Posterior vena cava (tissue), 2 donors: ENCODE measurements at regions of chr5 and their contacts with region 1.

Region 1: DNA sequence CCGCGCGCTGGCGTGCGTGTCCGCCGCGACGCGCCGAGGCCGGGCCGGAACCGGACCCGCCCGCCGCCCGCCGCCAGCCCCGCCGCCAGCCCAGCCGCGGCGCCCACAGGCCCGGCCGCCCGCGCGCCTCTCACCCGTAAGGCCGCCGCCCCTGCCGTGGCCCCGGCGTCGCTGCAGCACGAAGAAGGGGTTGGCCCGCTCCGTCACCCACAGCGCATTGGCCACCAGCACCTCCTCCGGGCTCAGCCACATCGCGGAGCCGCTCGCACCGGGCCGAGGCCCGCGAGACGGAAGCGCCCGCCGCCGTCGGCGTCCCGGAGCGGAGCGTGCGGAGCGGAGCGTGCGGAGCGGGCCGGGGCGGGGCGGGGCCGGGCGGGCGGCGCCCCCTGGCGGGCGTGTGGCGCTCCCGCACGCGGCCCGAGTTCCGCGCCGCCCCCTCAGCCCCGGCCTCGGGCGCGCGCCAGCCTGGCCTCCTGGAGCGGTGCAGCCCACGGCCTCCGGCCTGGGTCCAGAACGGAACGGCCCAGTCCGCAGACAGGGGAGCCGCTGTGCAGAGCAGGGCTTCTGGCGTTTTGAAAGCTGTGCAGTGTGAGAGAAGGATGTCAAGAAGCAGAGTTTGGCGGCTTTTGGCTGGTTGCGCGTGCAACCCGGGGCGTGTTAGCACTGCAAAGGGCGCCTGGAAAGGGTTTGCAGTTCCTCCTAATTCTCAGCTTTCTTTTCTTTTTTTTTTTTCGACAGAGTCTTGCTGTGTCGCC is at the start of gene TBC1D9B:
- DNase-seq: peak; percentile 90
- total RNA-seq, gene TBC1D9B: 85.0 to 90.5 TPM

Region 2: GRCh38 chr5:179763215-179763945 is 144.4 kb before region 1 on chr5:
- intact Hi-C with region 1: loop called in 1 of 2 experiments (anchors 5 kb)
- DNase-seq: peak; percentile 81

Region 3: GRCh38 chr5:179852993-179853547 is 54.7 kb before region 1 on chr5:
- intact Hi-C with region 1: no loop called
- DNase-seq: peak; percentile 37